ENCODE measurements at regions of chr16 and their contacts with region 1.

Region 1: DNA sequence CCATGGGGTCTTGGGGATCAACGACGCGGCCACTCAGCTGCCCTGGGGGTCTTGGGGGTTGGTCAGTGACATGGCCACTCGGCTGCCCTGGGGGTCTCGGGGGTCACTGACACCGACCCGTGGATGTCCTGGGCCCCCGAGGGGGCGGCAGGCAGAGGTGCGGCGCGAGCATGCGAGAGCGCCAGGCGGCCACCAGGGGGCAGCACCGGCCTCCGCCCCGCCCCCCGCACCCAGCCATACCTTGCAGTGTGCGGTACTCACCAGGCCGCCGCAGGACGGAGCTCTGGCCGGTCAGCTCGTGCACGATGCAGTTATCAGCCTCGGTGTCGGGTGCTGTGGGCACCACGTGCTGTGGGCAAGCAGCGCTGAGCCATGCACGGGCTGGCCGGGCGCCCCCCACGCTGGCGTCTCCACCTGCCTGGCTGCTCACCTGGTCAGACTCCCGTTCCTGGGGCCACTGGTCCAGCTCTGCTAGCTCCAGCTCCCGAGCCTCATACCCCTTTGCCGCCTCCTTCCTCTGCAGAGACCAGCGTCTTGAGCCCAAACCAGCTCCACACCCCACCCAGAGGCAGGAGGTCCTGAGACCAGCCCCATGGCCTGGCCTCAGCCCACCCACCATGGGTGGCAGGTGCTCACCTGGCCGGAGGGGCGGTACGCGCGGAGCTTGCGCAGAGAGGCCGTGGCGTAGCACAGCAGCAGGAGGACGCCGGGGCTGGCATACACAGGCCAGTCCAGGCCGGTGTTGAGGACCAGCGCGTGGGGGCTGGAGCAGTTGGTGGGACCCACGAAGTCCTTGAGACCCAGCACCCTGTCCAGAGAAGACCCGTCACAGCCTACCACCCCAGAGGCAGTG is 31.2 kb downstream of the CTU2 start:
- DNase-seq: peak; percentile 65 to 84
- H3K4me3 ChIP-seq: no peak overlapping the region
- H3K27ac ChIP-seq: no peak overlapping the region
- H3K4me1 ChIP-seq: peaks cover 0 to 18% (median 4%) of the 10 kb centered on the region in 4 donors
- H3K27me3 ChIP-seq: no peaks in the 10 kb centered on the region
- CTCF ChIP-seq: peak; percentile 96 to 99

Region 2: GRCh38 chr16:87812200-87812656 is 925.3 kb before region 1 on chr16:
- intact Hi-C with region 1: no loop called
- DNase-seq: no peak
- H3K4me3 ChIP-seq: no peak overlapping the region
- H3K27ac ChIP-seq: no peak overlapping the region
- H3K4me1 ChIP-seq: peaks cover 0 to 2% (median 2%) of the 10 kb centered on the region in 4 donors
- H3K27me3 ChIP-seq: peaks cover 0 to 42% of the 10 kb centered on the region in 2 donors
- CTCF ChIP-seq: no peak

Region 3: DNA sequence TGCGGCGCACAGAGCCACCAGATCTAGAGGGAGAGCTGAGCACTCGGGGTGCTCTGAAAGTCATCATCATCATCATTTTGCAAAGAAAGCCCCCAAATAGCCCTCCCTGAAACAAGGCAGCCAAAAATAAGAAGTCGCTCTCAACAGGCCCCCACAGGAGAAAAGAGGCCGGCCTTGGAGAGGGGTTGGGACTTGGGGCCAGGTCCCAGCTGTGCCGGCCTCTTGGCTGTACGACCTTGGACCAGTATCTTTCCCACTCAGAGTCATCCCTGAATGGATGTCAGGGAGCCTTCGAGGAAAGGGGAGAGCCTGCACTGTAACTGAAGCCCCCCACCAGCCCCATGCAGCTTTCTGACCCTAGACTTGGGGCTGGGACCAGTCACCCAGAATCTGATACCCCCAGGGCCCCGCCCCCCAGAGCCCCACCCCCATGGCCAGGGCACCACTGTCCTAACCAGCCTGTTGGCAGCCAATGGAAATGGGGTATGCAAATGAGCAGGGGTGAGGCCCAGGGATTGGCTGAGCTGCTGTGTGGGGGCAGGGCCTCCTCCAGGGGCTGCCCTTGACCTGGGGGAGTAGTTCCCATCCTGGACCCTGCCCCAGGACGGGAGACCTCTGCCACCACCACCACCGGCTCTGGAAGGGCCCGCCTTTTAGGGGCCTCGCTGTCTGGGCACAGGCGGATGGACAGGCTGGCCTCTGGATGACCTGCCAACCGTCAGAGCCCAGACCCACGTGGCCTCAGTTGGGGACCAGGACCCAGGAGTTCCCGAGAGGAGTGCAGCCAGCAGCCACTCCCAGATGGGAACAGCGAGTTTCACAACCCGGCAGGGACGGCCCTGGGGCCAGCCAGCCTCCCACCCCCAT is 269.0 kb before region 1 on chr16:
- intact Hi-C with region 1: no loop called
- DNase-seq: no peak
- H3K4me3 ChIP-seq: no peak overlapping the region
- H3K27ac ChIP-seq: no peak overlapping the region
- H3K4me1 ChIP-seq: no peaks in the 10 kb centered on the region
- H3K27me3 ChIP-seq: peaks cover 0 to 11% of the 10 kb centered on the region in 2 donors
- CTCF ChIP-seq: no peak

Region 4: DNA sequence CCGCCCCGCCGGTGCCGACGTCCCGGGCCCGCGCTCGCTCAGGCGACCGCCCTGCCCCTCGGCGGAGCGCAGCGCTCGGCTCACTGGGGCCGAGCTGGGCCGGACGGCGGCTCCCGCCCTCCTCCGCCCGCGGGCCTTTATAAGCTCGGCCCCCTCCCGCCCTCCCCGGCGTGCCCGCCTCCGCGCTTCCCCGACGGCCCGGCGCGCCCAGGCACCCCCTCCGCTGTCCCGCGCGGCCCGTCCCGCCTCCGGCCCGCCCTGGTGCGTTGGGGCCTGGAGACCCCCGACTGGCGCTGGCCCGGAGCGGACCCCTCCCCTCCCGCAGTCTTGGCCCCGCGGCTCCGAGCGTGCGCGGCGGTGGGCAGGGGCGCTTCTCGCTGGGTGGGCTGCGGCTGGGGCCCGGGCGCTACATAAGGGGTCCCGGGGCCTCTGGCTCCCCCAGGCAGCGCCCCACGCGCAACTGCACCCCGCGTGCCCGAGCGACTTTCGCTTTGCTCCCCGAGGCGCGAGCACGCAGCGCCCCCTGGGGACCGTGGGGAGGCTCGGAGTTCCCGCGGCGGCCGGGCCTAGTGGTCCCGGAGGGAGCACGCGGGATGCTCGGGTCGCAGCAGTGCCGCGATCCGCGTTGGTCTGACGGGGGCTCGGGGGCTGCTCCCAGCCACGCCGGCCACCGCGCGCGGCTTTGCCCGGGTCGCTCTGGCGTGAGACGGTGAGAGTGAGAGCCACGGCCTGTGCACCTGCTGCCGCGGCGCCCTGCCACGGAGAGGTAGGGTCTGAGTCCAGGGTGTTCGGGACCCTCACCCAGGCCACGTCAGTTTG is 47.8 kb after region 1 on chr16 and contains the start of gene PIEZO1:
- intact Hi-C with region 1: loop called (anchors 2 kb)
- DNase-seq: peak; percentile 57 to 84
- H3K4me3 ChIP-seq: peak within 1 kb of the TSS; percentile 76 to 96
- H3K27ac ChIP-seq: peak within 1 kb of the TSS; percentile 87 to 90
- H3K4me1 ChIP-seq: peaks cover 0 to 45% (median 33%) of the 10 kb centered on the region in 4 donors
- H3K27me3 ChIP-seq: peaks cover 0 to 4% of the 10 kb centered on the region in 2 donors
- CTCF ChIP-seq: peak; percentile 89 to 94

Region 5: DNA sequence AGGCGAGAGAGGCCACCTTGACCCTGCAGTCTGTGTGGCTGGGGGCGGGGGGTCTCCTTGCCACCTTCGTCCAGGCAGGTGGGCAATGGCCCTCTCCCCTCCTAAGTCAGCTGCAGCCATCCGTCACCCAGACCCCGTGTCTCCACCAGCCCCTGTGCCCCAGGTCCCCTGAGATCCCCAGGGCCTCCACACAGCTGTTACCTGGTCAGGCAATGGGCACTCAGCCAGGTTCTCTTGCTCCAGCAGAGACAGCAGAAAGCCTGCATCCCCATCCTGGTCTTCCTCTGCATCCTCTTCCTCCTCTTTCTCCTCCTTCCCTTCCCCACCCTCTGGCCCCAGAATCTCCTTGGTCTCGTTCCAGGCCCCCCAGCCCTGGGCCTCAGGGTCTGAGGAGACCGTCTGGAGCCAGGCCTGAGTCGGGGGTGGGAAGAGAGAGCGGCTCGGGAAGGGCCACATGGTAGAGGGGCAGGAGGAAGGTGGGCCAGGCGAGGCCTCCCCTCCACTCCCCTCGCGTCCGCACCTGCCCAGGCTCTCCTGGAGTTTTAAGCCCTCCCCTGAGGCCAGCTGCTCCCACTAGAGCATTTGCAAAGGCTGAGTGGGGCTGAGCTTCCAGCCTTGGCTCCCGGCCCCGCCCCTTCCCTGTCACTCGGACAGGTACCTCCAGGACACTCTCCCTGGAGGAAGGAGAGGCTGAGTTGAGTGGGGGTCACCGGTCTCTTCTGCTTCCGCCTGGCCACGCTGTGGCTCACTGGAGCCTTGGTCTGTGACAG is 128.8 kb after region 1 on chr16 and contains the start of gene PABPN1L:
- intact Hi-C with region 1: loop called (anchors 10 kb)
- DNase-seq: no peak
- H3K4me3 ChIP-seq: no peak within 1 kb of the TSS
- H3K27ac ChIP-seq: no peak within 1 kb of the TSS
- H3K4me1 ChIP-seq: no peaks in the 10 kb centered on the region
- H3K27me3 ChIP-seq: peaks cover 0 to 53% of the 10 kb centered on the region in 2 donors
- CTCF ChIP-seq: no peak

Region 6: DNA sequence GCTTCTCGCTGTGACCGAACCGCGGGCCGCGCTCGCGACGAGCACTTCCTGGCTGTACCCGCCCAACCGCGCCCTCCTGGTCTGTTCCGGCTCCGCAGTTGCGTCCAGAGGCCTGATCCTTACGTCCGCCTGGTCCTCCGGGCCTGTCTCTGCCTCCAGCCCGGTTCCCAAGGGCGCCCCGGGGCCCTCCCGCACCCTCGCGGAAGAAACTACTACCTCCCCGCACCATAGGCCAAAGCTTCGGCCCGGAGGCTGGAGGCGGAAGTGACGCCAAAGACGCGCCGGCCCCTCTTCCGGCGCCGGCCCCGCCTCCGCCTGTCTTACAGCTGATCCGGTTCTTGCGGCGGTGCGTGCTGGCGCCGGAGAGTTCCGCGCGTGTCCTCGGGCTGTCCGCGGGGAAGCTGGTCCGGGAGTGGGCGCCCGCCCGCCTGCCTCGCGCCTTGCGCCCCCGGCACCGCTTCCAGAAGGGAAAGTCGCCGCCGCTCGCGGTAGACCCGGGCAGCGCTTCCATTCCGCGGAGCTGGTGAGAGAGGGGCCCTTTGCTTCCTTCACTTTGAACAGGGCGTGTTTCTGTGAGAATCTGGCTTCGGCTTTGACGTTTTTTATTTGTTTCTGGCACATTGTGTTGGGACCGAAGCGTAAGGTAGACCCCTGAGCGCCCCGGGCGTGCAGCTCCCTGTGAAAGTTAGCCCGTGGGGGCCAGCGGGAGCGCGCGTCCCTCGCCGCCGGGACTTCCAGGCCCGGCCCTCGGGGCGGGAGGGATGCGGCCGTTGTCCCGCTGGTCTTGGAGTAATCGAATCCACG is 480.1 kb after region 1 on chr16 and contains the start of gene ZNF778:
- intact Hi-C with region 1: loop called (anchors 5 kb)
- DNase-seq: peak; percentile 84 to 91
- H3K4me3 ChIP-seq: peak within 1 kb of the TSS; percentile 74 to 84
- H3K27ac ChIP-seq: peak within 1 kb of the TSS; percentile 88 to 95
- H3K4me1 ChIP-seq: peaks cover 0 to 28% (median 19%) of the 10 kb centered on the region in 4 donors
- H3K27me3 ChIP-seq: no peaks in the 10 kb centered on the region
- CTCF ChIP-seq: no peak

Measured in tibial artery (tissue), 4 donors.